ENCODE measurements at regions of chr2 and their contacts with region 1.

Region 1: GRCh38 chr2:201795607-201796477 is 10.5 kb upstream of the CDK15 start:
- DNase-seq: no peak
- ATAC-seq: peak; percentile 46; the same call in 1 of the 3 replicates
- H3K4me3 ChIP-seq: no peak overlapping the region
- H3K27ac ChIP-seq: no peak overlapping the region
- H3K4me1 ChIP-seq: no peaks in the 10 kb centered on the region
- H3K27me3 ChIP-seq: no peaks in the 10 kb centered on the region
- CTCF ChIP-seq: peak; percentile 42 to 69 (median 54); a peak in 5 of 6 replicates
- EP300 ChIP-seq: no peak
- POLR2A ChIP-seq: no peak
- RAD21 ChIP-seq: peak; percentile 59

Region 2: DNA sequence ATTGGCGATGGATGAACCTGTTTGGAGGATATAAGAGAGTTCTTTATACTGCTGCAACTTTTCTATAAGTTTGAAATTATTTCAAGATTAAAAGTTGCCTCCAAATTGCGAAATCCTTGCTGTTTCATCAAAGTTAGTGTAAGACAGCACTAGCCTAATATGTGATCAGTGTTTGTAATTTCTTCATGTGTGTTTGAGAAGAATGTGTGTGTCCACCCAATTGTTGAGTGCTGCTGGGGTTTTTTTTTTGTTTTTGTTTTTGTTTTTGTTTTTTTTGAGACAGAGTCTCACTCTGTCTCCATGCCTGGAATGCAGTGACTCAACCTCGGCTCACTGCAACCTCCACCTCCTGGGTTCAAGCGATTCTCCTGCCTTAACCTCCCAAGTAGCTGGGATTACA is 43.9 kb after region 1 on chr2:
- CTCF ChIA-PET with region 1: no interaction called
- POLR2A ChIA-PET with region 1: no interaction called
- RAD21 ChIA-PET with region 1: no interaction called
- SMC1A ChIA-PET with region 1: no interaction called
- in situ Hi-C with region 1: no loop called
- intact Hi-C with region 1: no loop called
- DNase-seq: no peak
- ATAC-seq: no peak
- H3K4me3 ChIP-seq: no peak overlapping the region
- H3K27ac ChIP-seq: no peak overlapping the region
- H3K4me1 ChIP-seq: no peaks in the 10 kb centered on the region
- H3K27me3 ChIP-seq: no peaks in the 10 kb centered on the region
- CTCF ChIP-seq: no peak
- EP300 ChIP-seq: no peak
- POLR2A ChIP-seq: no peak
- RAD21 ChIP-seq: no peak

Region 3: GRCh38 chr2:202064171-202064880 is 268.5 kb after region 1 on chr2:
- CTCF ChIA-PET with region 1: interaction called, 3 read pairs
- POLR2A ChIA-PET with region 1: no interaction called
- RAD21 ChIA-PET with region 1: no interaction called
- SMC1A ChIA-PET with region 1: no interaction called
- in situ Hi-C with region 1: no loop called
- intact Hi-C with region 1: loop called (anchors 5 kb)
- DNase-seq: no peak
- ATAC-seq: no peak
- H3K4me3 ChIP-seq: no peak overlapping the region
- H3K27ac ChIP-seq: no peak overlapping the region
- H3K4me1 ChIP-seq: 0 out of 2 replicates have a peak, but pooled peaks cover 2% of the 10 kb centered on the region
- H3K27me3 ChIP-seq: no peaks in the 10 kb centered on the region; a peak in 1 of 4 replicates
- CTCF ChIP-seq: no peak
- EP300 ChIP-seq: no peak
- POLR2A ChIP-seq: no peak
- RAD21 ChIP-seq: no peak

Measured in GM12878 (cell line).